ENCODE measurements at regions of chr17 and their contacts with region 1.

Region 1: GRCh38 chr17:38853292-38854219 is at the start of gene RPL23:
- DNase-seq: peak; percentile 67 to 94 (median 91)
- ATAC-seq: peak; percentile 91
- H3K4me3 ChIP-seq: peak within 1 kb of the TSS; percentile 70
- H3K4me3 Mint-ChIP-seq: peak within 1 kb of the TSS; percentile 82 to 98 (median 96)
- H3K27ac ChIP-seq: peak within 1 kb of the TSS; percentile 89
- H3K27ac Mint-ChIP-seq: peak within 1 kb of the TSS; percentile 96 to 100 (median 99)
- H3K4me1 ChIP-seq: peaks cover 16 to 25% of the 10 kb centered on the region in 2 donors
- H3K4me1 Mint-ChIP-seq: peaks cover 34 to 53% (median 45%) of the 10 kb centered on the region in 7 donors
- H3K27me3 ChIP-seq: no peaks in the 10 kb centered on the region
- H3K27me3 Mint-ChIP-seq: no peaks in the 10 kb centered on the region
- total RNA-seq, gene RPL23: 1,312 to 2,438 (median 1,877) TPM

Region 2: DNA sequence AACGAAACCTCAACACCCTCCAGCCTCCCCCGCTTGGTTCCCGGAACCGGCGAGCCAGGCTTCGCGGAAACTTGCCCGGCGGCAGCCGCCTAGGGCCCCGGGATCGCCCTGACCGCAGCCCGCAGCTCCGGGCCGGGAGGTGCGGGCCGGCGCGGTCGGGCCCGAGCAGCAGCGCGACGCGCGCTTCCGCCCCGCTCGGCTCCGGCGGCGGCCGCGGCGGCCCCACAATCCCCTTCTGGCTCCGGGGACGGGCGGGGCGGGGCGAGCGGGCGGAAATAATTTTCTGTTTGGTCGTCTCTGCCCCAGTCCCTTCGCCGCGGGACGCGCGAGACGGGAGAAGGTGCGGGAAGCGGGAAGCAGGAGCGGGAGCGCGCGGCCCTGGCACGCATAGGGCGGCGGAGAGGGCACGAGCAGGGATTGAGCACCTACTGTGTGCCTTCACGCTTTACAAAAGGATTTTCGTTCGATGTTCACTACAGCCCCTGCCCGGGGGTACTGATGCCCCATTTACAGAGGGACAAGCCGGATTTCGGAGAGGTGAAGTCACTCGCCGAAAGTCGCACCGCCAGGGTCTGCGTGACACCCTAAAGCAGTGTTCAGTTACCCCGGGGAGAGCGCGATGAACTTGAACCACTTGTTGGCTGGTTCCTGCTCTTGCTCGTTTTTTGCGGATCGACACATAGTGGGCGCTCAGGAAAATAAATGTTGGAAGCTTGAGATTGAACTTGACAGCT is 151.2 kb before region 1 on chr17:
- CTCF ChIA-PET with region 1: no interaction called
- POLR2A ChIA-PET with region 1: interaction called, 3 read pairs
- intact Hi-C with region 1: loop called in 1 of 2 experiments (anchors 5 kb)
- DNase-seq: peak; percentile 69 to 81 (median 75)
- ATAC-seq: peak; percentile 60
- H3K4me3 ChIP-seq: peak overlapping the region; percentile 70
- H3K4me3 Mint-ChIP-seq: peak overlapping the region; percentile 93 to 100 (median 97)
- H3K27ac ChIP-seq: peak overlapping the region; percentile 97
- H3K27ac Mint-ChIP-seq: peak overlapping the region; percentile 91 to 100 (median 98)
- H3K4me1 ChIP-seq: peaks cover 17 to 18% of the 10 kb centered on the region in 2 donors
- H3K4me1 Mint-ChIP-seq: peaks cover 26 to 56% (median 33%) of the 10 kb centered on the region in 7 donors
- H3K27me3 ChIP-seq: no peaks in the 10 kb centered on the region
- H3K27me3 Mint-ChIP-seq: no peaks in the 10 kb centered on the region

Region 3: DNA sequence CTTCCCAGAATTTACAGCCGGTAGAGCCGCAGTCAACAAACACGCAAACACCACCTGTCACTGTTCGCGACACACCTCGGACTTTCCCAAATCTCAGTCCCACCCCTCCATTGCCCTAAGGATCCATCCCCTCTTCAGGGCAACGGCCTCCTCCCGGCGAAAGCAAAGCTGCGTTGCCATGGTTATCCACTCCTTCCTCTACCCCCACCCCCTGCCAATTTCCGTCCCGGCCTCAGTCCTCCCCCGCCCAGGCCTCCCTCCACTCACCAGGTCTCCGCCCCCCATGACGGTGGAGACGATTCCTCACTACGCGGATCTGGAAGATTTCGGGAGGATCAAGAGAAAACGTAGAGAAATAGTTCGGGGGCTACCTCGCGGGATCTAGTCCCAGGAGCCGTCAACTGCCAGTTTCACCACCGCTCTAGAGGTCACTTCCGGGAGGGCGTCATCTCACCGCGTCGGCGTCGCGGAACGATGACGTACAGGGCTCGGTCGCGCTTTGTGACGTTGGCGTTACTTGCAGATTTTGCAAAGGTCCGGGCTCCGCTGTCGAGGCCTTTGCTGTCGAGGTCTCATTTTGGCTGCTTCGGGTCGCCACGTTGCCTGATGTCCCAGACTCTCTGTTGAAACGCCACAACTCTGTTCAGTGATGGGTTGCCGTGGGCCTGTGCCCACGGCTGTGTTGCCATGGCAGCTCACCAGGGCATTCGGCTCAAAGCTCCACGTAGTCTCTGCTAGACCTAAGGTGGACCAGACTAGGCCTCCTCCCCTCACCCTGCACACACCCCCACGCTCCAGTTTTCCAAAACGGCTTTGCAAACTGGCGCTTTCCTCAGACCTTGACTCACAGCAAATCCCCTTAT is 28.4 kb before region 1 on chr17 and contains the start of gene CWC25:
- CTCF ChIA-PET with region 1: interaction called, 3 read pairs
- POLR2A ChIA-PET with region 1: interaction called, 74 read pairs
- intact Hi-C with region 1: loop called (anchors 1 kb)
- DNase-seq: peak; percentile 91 to 100 (median 97)
- ATAC-seq: peak; percentile 92
- H3K4me3 ChIP-seq: peak within 1 kb of the TSS; percentile 77
- H3K4me3 Mint-ChIP-seq: peak within 1 kb of the TSS; percentile 92 to 100 (median 99)
- H3K27ac ChIP-seq: peak within 1 kb of the TSS; percentile 92
- H3K27ac Mint-ChIP-seq: peak within 1 kb of the TSS; percentile 97 to 100 (median 100)
- H3K4me1 ChIP-seq: peaks cover 18 to 21% of the 10 kb centered on the region in 2 donors
- H3K4me1 Mint-ChIP-seq: peaks cover 13 to 42% (median 34%) of the 10 kb centered on the region in 7 donors
- H3K27me3 ChIP-seq: no peaks in the 10 kb centered on the region
- H3K27me3 Mint-ChIP-seq: peaks cover 0 to 5% (median 0%) of the 10 kb centered on the region in 5 donors
- total RNA-seq, gene CWC25: 33.0 to 69.5 (median 53.4) TPM

Region 4: DNA sequence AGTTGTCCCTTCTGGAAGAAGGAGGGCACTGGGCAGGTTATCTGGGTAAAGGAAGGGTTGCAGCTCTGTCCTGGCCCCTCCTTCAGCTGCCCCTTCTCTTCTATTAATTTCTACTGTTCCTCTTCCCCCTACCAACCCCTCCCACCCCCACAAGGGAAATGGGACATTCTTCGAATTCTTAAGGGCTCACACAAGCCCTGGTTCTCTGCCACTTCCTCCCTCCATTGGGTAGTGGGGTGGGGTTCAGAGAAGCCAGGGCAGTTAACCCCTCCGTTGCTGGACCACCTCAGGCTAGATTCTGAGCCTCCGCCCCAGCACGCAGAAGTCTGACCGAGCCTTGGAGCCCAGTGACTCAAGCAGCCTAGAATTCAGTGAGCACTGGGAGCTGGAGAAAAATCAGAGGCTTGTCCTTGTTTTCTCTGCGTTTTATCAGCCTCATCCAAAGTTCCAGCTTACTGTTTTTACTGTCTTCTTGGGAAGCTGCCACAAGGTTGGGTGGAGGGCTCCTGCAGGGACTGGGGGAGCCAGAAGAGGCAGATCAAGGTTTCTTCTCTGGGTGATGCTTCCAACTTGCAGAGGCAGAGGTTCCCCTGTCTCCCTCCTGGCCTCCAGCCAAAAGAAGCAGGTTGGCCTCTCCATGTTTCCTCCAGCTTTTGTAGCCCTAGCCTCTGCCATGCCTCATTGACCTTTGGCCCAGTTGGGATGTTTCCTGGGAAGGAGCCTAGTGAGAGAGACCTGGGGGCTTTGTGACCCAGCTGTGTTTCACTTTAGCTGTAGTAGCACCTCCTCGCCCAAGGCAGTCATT is 26.5 kb after region 1 on chr17:
- CTCF ChIA-PET with region 1: no interaction called
- POLR2A ChIA-PET with region 1: interaction called, 29 read pairs
- intact Hi-C with region 1: no loop called
- DNase-seq: peak in 4 of 9 donors; percentile 34 to 44 (median 37)
- ATAC-seq: no peak
- H3K4me3 ChIP-seq: peak overlapping the region; percentile 47
- H3K4me3 Mint-ChIP-seq: peak overlapping the region; percentile 60 to 94 (median 80)
- H3K27ac ChIP-seq: peak overlapping the region; percentile 79
- H3K27ac Mint-ChIP-seq: peak overlapping the region; percentile 68 to 96 (median 94)
- H3K4me1 ChIP-seq: peaks cover 76 to 91% of the 10 kb centered on the region in 2 donors
- H3K4me1 Mint-ChIP-seq: peaks cover 66 to 95% (median 87%) of the 10 kb centered on the region in 7 donors
- H3K27me3 ChIP-seq: no peaks in the 10 kb centered on the region
- H3K27me3 Mint-ChIP-seq: no peaks in the 10 kb centered on the region

Region 5: GRCh38 chr17:38898812-38899348 is 45.3 kb after region 1 on chr17:
- CTCF ChIA-PET with region 1: no interaction called
- POLR2A ChIA-PET with region 1: interaction called, 44 read pairs
- intact Hi-C with region 1: loop called in 1 of 2 experiments (anchors 1 kb)
- DNase-seq: peak; percentile 48 to 84 (median 73)
- ATAC-seq: peak; percentile 89
- H3K4me3 ChIP-seq: peak overlapping the region; percentile 46
- H3K4me3 Mint-ChIP-seq: peak overlapping the region; percentile 77 to 93 (median 83)
- H3K27ac ChIP-seq: peak overlapping the region; percentile 81
- H3K27ac Mint-ChIP-seq: peak overlapping the region; percentile 86 to 100 (median 98)
- H3K4me1 ChIP-seq: peaks cover 60 to 85% of the 10 kb centered on the region in 2 donors
- H3K4me1 Mint-ChIP-seq: peaks cover 30 to 71% (median 65%) of the 10 kb centered on the region in 7 donors
- H3K27me3 ChIP-seq: no peaks in the 10 kb centered on the region
- H3K27me3 Mint-ChIP-seq: no peaks in the 10 kb centered on the region

Region 6: GRCh38 chr17:39036014-39036413 is 182.5 kb after region 1 on chr17:
- CTCF ChIA-PET with region 1: no interaction called
- POLR2A ChIA-PET with region 1: no interaction called
- intact Hi-C with region 1: no loop called
- DNase-seq: no peak
- ATAC-seq: no peak
- H3K4me3 ChIP-seq: no peak overlapping the region
- H3K4me3 Mint-ChIP-seq: no peak overlapping the region
- H3K27ac ChIP-seq: no peak overlapping the region
- H3K27ac Mint-ChIP-seq: no peak overlapping the region
- H3K4me1 ChIP-seq: no peaks in the 10 kb centered on the region
- H3K4me1 Mint-ChIP-seq: peaks cover 0 to 6% (median 0%) of the 10 kb centered on the region in 7 donors
- H3K27me3 ChIP-seq: no peaks in the 10 kb centered on the region
- H3K27me3 Mint-ChIP-seq: peaks cover 0 to 52% (median 4%) of the 10 kb centered on the region in 5 donors

Region 7: GRCh38 chr17:39199820-39200069 is 346.2 kb after region 1 on chr17:
- CTCF ChIA-PET with region 1: no interaction called
- POLR2A ChIA-PET with region 1: interaction called, 11 read pairs
- intact Hi-C with region 1: no loop called
- DNase-seq: peak in 7 of 9 donors; percentile 61 to 93 (median 89)
- ATAC-seq: peak; percentile 85
- H3K4me3 ChIP-seq: peak overlapping the region; percentile 83
- H3K4me3 Mint-ChIP-seq: peak overlapping the region; percentile 87 to 98 (median 92)
- H3K27ac ChIP-seq: peak overlapping the region; percentile 98
- H3K27ac Mint-ChIP-seq: peak overlapping the region; percentile 93 to 100 (median 99)
- H3K4me1 ChIP-seq: peaks cover 42 to 46% of the 10 kb centered on the region in 2 donors
- H3K4me1 Mint-ChIP-seq: peaks cover 38 to 72% (median 54%) of the 10 kb centered on the region in 7 donors
- H3K27me3 ChIP-seq: no peaks in the 10 kb centered on the region
- H3K27me3 Mint-ChIP-seq: no peaks in the 10 kb centered on the region